Naive thymus-derived CD4-positive, alpha-beta T cell (primary cell): ENCODE measurements at regions of chr16 and their contacts with region 1.

Region 1: DNA sequence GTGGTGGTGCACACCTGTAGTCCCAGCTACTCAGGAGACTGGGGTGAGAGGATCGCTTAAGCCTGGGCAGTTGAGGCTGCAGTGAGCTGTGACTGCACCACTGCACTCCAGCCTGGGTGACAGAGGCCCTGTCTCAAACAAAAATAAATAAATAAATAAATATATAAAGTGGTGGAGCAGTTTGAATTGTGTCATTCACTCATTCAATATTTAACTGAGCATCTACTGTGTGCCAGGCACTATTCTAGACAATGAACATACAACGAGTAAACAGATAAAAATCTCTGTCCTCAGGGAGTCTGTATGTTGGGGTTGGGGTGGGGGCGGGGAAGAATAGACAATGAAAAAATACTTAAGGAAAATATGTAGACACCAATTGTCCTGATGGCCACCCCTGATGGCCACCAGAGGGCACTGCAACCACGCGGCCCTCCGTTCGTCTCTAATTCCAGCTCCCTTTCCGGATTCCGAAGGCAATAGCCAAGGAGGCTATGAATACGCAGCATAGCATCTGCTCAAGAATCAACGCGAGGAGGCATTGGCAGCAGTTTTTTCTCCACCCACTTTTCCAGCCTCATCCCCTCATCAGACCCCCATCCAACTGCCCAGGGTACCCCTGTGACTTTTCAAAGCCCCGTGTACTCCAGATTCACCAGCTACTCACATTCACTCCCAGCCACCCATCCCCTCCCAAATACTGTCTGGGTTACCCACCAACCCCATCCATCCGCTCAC is 21.4 kb downstream of the QPRT start:
- DNase-seq: peak; percentile 63 to 82 (median 75)
- ATAC-seq: peak; percentile 60
- H3K4me3 ChIP-seq: peak overlapping the region; percentile 41
- H3K4me3 Mint-ChIP-seq: peak overlapping the region; percentile 12 to 84 (median 75)
- H3K27ac ChIP-seq: no peak overlapping the region
- H3K27ac Mint-ChIP-seq: peak overlapping the region; percentile 87 to 99 (median 94)
- H3K4me1 ChIP-seq: peaks cover 31 to 32% of the 10 kb centered on the region in 2 donors
- H3K4me1 Mint-ChIP-seq: peaks cover 30 to 39% (median 32%) of the 10 kb centered on the region in 7 donors
- H3K27me3 ChIP-seq: no peaks in the 10 kb centered on the region
- H3K27me3 Mint-ChIP-seq: no peaks in the 10 kb centered on the region

Region 2: DNA sequence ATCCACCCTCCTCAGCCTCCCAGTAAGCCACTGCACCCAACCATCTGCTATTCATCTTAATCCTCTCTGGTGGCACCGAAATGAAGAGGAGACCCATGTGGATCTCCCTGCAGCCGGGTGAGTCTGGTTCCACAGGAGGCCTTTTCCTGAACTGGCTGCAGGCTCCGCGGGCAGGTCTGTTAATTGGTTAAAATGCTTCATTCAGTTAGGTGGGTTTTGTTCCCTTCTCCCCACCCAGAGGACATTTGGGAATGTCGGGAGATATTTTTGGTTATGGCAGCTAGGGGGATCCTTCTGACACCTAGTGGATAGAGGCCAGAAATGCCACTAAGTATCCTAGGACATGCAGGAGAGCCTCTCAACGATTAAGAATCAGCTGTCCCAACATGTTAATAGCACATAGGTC is 28.7 kb after region 1 on chr16:
- CTCF ChIA-PET with region 1: interaction called, 19 read pairs
- POLR2A ChIA-PET with region 1: interaction called, 27 read pairs
- intact Hi-C with region 1: no loop called
- DNase-seq: no peak
- ATAC-seq: peak; percentile 41
- H3K4me3 ChIP-seq: no peak overlapping the region
- H3K4me3 Mint-ChIP-seq: peak overlapping the region in 1 of 10 donors; percentile 13
- H3K27ac ChIP-seq: no peak overlapping the region
- H3K27ac Mint-ChIP-seq: peak overlapping the region in 3 of 9 donors; percentile 14 to 43 (median 26)
- H3K4me1 ChIP-seq: peaks cover 7 to 9% of the 10 kb centered on the region in 2 donors
- H3K4me1 Mint-ChIP-seq: peaks cover 17 to 45% (median 28%) of the 10 kb centered on the region in 7 donors
- H3K27me3 ChIP-seq: no peaks in the 10 kb centered on the region
- H3K27me3 Mint-ChIP-seq: peaks cover 0 to 22% (median 0%) of the 10 kb centered on the region in 5 donors

Region 3: DNA sequence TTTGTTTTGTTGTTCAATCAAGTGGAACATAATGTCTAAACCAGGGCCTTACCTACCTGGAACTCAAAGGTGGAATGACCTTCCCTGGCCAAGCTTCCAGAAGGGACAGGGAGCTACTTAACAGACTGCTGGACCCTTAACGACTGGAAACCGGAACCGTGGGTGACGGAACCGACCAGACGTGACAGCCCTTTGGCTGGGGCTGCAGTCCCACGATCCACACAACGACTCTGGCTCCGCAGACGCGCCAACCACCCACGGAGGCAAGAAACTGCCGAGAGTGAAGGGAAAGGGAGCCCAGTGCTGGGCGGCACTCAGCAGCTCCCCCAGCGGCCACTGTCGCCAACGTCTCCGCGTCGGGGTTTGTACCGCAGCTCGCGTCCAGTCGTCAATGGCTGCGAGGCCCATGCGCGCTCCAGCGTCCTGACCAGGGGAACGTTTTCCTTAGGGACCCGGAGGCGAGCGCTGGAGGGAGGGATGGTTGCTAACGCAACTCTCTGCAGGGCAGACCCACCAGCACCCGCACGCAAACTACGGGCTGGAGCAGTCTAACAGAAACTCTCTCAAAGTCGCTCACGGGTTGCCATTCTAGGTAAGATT is 84.6 kb after region 1 on chr16:
- CTCF ChIA-PET with region 1: interaction called, 40 read pairs
- POLR2A ChIA-PET with region 1: interaction called, 62 read pairs
- intact Hi-C with region 1: loop called (anchors 1 kb)
- DNase-seq: peak; percentile 59 to 77 (median 68)
- ATAC-seq: peak; percentile 95
- H3K4me3 ChIP-seq: peak overlapping the region; percentile 36
- H3K4me3 Mint-ChIP-seq: peak overlapping the region; percentile 56 to 80 (median 72)
- H3K27ac ChIP-seq: peak overlapping the region; percentile 44
- H3K27ac Mint-ChIP-seq: peak overlapping the region; percentile 58 to 95 (median 80)
- H3K4me1 ChIP-seq: peaks cover 12 to 15% of the 10 kb centered on the region in 2 donors
- H3K4me1 Mint-ChIP-seq: peaks cover 12 to 44% (median 28%) of the 10 kb centered on the region in 7 donors
- H3K27me3 ChIP-seq: no peaks in the 10 kb centered on the region
- H3K27me3 Mint-ChIP-seq: peaks cover 0 to under 1% (median 0%) of the 10 kb centered on the region in 5 donors

Region 4: DNA sequence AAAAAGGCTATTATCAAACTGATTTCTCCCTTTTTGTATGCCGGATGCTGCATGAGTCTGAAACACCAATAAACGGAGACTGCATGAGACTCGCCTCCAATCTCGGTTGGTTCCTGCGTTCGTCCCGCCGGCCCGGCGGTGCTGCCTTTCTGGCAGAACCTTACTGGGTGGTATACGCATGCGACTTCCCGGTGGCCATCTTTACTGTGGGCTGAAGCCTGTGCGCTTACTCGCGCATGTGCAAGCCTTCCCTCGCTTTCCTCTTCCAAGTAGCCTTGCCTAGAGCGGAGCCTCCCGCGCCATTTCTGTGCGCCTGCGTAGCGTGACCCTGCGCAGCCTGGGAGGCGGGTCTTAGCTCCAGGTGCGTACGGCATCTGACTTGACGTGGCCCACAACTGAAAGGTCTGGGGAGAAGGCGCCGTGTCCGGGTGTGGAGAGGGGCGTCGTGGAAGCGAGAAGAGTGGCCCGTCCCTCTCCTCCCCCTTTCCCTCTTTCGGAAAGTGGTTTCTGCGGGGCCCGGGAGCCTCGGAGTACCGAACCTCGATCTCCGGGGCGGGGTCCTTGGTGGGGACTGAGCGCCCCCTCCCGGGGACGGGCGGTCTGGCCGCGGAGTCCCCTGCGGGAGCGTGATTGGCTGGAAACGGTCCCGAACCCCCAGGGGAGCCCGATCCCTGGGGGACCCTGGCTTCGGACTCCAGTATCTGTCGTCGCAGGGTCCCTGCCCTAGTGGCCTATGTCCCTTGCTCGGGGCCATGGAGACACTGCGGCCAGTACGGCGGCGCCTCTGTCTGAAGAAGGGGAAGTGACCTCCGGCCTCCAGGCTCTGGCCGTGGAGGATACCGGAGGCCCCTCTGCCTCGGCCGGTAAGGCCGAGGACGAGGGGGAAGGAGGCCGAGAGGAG is 115.6 kb after region 1 on chr16 and contains the start of gene PAGR1:
- CTCF ChIA-PET with region 1: interaction called, 55 read pairs
- POLR2A ChIA-PET with region 1: interaction called, 76 read pairs
- intact Hi-C with region 1: loop called (anchors 1 kb)
- DNase-seq: peak; percentile 92 to 99 (median 99)
- ATAC-seq: peak; percentile 87
- H3K4me3 ChIP-seq: peak within 1 kb of the TSS; percentile 99
- H3K4me3 Mint-ChIP-seq: peak within 1 kb of the TSS; percentile 85 to 100 (median 96)
- H3K27ac ChIP-seq: peak within 1 kb of the TSS; percentile 92
- H3K27ac Mint-ChIP-seq: peak within 1 kb of the TSS; percentile 95 to 99 (median 99)
- H3K4me1 ChIP-seq: peaks cover 29 to 41% of the 10 kb centered on the region in 2 donors
- H3K4me1 Mint-ChIP-seq: peaks cover 40 to 75% (median 59%) of the 10 kb centered on the region in 7 donors
- H3K27me3 ChIP-seq: no peaks in the 10 kb centered on the region
- H3K27me3 Mint-ChIP-seq: peaks cover 0 to 22% (median 0%) of the 10 kb centered on the region in 5 donors
- total RNA-seq, gene PAGR1: 17.5 to 42.0 (median 25.7) TPM

Region 5: DNA sequence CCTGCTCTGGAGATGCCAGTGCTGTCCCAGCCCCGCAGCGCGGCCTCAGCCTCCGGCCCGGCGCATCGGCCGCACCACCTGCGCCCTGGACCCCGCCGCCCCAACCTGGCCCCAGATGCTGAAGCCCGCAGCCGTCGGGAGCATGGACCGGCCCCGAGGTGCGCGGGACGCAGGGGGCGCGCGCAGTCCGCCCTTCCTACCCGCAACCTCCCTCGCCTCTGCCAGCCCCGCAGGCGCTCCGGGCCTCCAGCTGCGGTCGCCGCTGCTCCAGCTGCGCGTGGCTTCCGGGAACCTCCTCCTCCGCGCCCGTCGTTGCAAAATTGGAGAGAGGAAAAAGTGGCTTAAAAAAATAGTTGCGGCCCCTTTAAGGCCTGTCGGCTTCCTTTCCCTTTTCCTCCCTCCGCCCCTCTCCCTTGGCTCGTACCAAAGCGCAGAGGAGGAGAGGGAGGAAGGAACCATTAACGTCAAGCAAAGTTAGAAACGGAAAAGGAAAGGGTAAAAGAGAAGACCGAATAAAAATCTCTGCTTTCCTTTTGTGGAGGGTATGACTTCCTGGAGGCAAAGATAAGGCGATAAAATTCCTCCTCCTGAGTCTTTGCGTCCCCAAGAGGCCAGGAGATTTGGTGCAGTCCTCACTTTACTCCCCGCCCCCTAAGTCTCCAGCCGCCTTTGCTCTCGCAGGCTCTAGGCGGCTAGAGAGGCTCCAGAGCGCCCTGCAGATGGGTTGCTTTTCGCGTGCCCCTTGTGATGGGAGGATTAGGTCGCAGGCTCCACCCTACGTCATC is 162.7 kb after region 1 on chr16 and contains the start of gene CDIPT:
- CTCF ChIA-PET with region 1: no interaction called
- POLR2A ChIA-PET with region 1: no interaction called
- intact Hi-C with region 1: loop called (anchors 1 to 5 kb)
- DNase-seq: peak; percentile 76 to 97 (median 93)
- ATAC-seq: peak; percentile 99
- H3K4me3 ChIP-seq: peak within 1 kb of the TSS; percentile 66
- H3K4me3 Mint-ChIP-seq: peak within 1 kb of the TSS; percentile 83 to 100 (median 96)
- H3K27ac ChIP-seq: peak within 1 kb of the TSS; percentile 90
- H3K27ac Mint-ChIP-seq: peak within 1 kb of the TSS; percentile 93 to 100 (median 99)
- H3K4me1 ChIP-seq: peaks cover 13 to 17% of the 10 kb centered on the region in 2 donors
- H3K4me1 Mint-ChIP-seq: peaks cover 12 to 35% (median 26%) of the 10 kb centered on the region in 7 donors
- H3K27me3 ChIP-seq: no peaks in the 10 kb centered on the region
- H3K27me3 Mint-ChIP-seq: peaks cover 0 to 3% (median 0%) of the 10 kb centered on the region in 5 donors
- total RNA-seq, gene CDIPT: 36.5 to 92.0 (median 69.9) TPM

Region 6: DNA sequence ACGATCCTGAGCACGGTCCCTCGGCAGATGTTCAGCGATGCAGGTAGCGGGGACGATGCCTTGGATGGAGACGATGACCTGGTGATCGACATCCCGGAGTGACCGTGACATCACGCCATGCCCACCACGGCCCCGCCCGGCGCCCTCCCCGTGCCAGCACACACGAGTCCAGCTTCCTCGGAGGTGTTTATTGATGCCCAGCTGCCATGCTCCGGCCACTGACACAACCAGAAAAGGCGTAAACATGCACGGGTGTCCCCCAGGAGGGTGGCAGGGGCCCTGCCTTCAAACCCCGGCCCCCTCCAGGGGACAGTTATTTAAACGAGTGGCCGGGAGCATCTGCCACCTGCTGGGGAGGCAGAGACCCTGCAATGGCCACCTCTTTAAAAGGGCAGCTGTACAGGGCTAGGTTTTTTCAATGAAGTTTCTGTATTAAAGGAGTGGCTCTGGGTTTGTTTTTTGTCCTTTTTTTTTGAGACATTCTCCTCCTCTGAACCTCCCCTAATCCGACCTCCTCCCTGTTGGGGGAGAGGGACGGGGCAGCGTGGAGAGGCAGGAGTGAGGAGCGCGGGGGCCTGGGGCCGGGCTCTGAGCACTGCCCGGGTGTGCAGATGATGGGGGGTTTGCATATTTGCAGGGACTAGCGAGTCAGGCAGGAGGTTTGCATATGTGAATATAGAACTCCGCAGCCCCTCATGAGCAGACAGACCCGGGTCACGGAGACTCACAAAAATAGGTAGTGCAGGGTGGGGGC is 305.1 kb after region 1 on chr16:
- CTCF ChIA-PET with region 1: interaction called, 10 read pairs
- POLR2A ChIA-PET with region 1: interaction called, 3 read pairs
- intact Hi-C with region 1: loop called in 1 of 2 experiments (anchors 1 kb)
- DNase-seq: peak in 7 of 9 donors; percentile 30 to 48 (median 43)
- ATAC-seq: peak; percentile 76
- H3K4me3 ChIP-seq: no peak overlapping the region
- H3K4me3 Mint-ChIP-seq: no peak overlapping the region
- H3K27ac ChIP-seq: no peak overlapping the region
- H3K27ac Mint-ChIP-seq: peak overlapping the region in 1 of 9 donors; percentile 48
- H3K4me1 ChIP-seq: peaks cover 4 to 6% of the 10 kb centered on the region in 2 donors
- H3K4me1 Mint-ChIP-seq: peaks cover 0 to 9% (median 4%) of the 10 kb centered on the region in 7 donors
- H3K27me3 ChIP-seq: peaks cover 0 to 4% of the 10 kb centered on the region in 2 donors
- H3K27me3 Mint-ChIP-seq: peaks cover 0 to 19% (median 0%) of the 10 kb centered on the region in 5 donors

Region 7: DNA sequence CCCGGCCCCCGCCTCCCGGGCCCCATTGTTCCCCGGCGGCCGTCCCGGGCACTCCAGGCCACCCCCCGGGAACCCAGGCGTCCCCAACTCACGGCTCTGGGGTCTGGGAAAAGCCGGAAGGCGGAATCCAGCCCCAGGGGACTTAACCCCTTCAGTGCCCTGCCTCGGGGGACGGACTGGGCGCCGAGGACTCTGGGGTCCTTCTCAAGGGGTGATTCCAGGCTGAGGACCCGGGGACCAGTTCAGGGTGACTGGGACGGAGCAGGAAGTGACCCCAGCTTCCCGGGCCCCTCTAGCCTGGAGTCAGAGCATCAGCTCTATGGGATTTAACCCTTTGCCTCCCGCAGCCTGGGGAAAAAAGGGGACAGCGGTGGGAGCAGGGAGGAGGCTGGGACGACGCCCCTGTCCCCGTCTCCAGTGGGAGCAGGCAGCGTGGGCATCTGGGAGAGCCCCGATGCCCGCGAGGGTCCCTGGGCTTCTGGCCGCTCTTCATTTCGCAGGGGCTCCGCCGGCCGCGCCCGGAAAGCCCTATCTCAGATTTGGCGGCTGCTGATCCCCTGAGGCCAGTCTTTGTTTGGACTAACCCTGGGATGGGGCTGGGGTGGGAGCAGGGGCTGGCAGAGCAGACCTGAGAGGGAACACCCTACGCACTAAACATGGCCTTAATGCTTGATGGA is 1086.7 kb after region 1 on chr16 and contains the start of gene ZNF629:
- CTCF ChIA-PET with region 1: no interaction called
- POLR2A ChIA-PET with region 1: no interaction called
- intact Hi-C with region 1: no loop called
- DNase-seq: peak in 5 of 9 donors; percentile 32 to 42 (median 33)
- ATAC-seq: peak; percentile 70
- H3K4me3 ChIP-seq: peak within 1 kb of the TSS; percentile 60
- H3K4me3 Mint-ChIP-seq: peak within 1 kb of the TSS; percentile 74 to 94 (median 88)
- H3K27ac ChIP-seq: peak within 1 kb of the TSS; percentile 68
- H3K27ac Mint-ChIP-seq: peak within 1 kb of the TSS in 8 of 9 donors; percentile 8 to 85 (median 50)
- H3K4me1 ChIP-seq: peaks cover 7% of the 10 kb centered on the region in 2 donors
- H3K4me1 Mint-ChIP-seq: peaks cover 0 to 25% (median 22%) of the 10 kb centered on the region in 7 donors
- H3K27me3 ChIP-seq: peaks cover 0 to 7% of the 10 kb centered on the region in 2 donors
- H3K27me3 Mint-ChIP-seq: peaks cover 0 to 43% (median 0%) of the 10 kb centered on the region in 5 donors
- total RNA-seq, gene ZNF629: 2.4 to 11.1 (median 4.2) TPM